H1 (cell line): ENCODE measurements at regions of chr6 and their contacts with region 1.

Region 1: DNA sequence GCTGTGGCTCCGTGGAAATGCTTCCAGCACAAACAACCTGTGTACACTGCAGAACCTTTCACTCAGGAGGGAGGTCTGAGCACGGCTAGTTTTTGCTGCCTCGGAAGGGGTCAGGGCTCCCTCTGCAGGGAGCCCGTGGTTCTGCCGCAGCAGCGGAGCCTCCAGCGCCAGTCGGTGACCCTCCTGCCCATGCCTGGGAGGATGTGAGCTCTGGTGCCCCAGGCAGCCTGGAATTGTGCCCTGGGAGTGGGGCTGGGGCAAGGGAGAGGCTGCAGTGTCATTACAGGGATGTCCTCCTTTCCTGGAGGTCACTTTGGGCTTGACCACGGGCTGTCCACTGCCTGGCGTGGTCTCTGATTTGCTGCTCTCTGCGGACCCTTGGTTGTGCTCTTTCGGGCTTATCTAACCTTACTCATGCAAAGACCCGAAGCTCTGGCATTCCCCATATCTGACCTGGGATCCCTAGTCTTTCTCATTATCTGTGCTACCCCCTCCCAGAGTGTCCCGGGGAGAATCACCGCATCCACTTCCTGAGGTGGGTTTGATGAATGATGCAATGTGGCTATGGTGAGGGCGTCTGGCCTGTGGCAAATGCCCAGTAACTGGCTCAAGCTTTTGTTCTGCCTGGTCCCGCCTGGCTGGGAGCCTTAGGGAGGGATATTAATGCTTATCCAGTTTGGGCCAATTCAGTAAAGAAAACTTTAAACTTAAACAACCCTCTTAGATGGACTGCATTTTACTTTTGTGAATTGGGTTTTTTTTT is 59.6 kb upstream of the TAGAP start:
- DNase-seq: peak; percentile 46 to 85
- H3K4me3 ChIP-seq: no peak overlapping the region
- H3K27ac ChIP-seq: no peak overlapping the region
- H3K4me1 ChIP-seq: peaks cover 1 to 4% (median 2%) of the 10 kb centered on the region in 4 experiments; a peak in 6 of 7 replicates
- H3K27me3 ChIP-seq: no peaks in the 10 kb centered on the region; a peak in 1 of 7 replicates
- CTCF ChIP-seq: peak; percentile 94 to 96 (median 95)
- EP300 ChIP-seq: no peak
- POLR2A ChIP-seq: peak in 1 of 2 experiments; percentile 34; a peak in 1 of 3 replicates
- RAD21 ChIP-seq: peak; percentile 91 to 96

Region 2: DNA sequence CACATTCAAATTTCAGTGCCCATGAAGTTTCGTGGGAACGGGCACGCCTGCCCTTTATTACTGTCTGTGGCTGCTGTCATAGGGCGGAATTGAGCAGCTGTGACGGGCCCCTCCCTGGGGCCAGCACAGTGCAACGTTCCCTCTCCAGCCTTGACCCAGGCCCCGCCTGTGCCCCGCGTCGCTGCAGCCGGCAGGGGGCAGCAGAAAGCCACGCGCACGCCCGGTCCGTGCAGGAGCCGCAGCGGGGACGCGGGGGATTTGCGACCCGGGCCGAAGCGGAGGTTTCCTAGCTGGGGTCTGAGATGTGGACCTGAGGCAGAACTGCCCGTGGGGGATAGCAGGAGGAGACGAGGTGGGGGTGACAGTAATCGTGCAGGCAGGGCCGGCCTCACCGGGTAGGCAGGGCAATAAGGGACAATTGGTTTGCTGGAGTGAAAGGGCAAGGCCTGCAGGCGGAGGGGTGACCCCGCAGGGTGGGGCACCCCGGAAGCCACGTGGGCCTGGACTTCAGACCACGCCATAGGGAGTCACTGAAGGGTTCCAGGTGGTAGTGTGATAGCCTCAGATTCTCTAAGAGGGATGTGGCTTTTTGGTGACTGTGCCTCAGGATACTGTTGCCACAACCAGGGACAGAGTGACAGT is 400.0 kb before region 1 on chr6:
- CTCF ChIA-PET with region 1: interaction called, 13 read pairs
- POLR2A ChIA-PET with region 1: no interaction called
- DNase-seq: peak; percentile 41 to 97
- H3K4me3 ChIP-seq: peak overlapping the region in 3 of 4 experiments; percentile 4 to 46 (median 19); a peak in 3 of 8 replicates
- H3K27ac ChIP-seq: no peak overlapping the region
- H3K4me1 ChIP-seq: peaks cover 0 to 4% (median 1%) of the 10 kb centered on the region in 4 experiments; a peak in 1 of 7 replicates
- H3K27me3 ChIP-seq: no peaks in the 10 kb centered on the region
- CTCF ChIP-seq: peak; percentile 93 to 94 (median 94)
- EP300 ChIP-seq: no peak
- POLR2A ChIP-seq: no peak
- RAD21 ChIP-seq: peak; percentile 95

Region 3: GRCh38 chr6:159042003-159042825 is 62.1 kb before region 1 on chr6:
- CTCF ChIA-PET with region 1: interaction called, 144 read pairs
- POLR2A ChIA-PET with region 1: interaction called, 4 read pairs
- DNase-seq: peak; percentile 59 to 73
- H3K4me3 ChIP-seq: peak overlapping the region in 1 of 4 experiments; percentile 24; a peak in 1 of 8 replicates
- H3K27ac ChIP-seq: peak overlapping the region; percentile 69
- H3K4me1 ChIP-seq: no peaks in the 10 kb centered on the region; a peak in 1 of 7 replicates
- H3K27me3 ChIP-seq: no peaks in the 10 kb centered on the region
- CTCF ChIP-seq: peak; percentile 88 to 97 (median 92)
- EP300 ChIP-seq: no peak
- POLR2A ChIP-seq: no peak
- RAD21 ChIP-seq: peak; percentile 83 to 87

Region 4: GRCh38 chr6:159080217-159080976 is 23.9 kb before region 1 on chr6:
- CTCF ChIA-PET with region 1: interaction called, 20 read pairs
- POLR2A ChIA-PET with region 1: interaction called, 4 read pairs
- DNase-seq: no peak
- H3K4me3 ChIP-seq: no peak overlapping the region
- H3K27ac ChIP-seq: no peak overlapping the region
- H3K4me1 ChIP-seq: no peaks in the 10 kb centered on the region
- H3K27me3 ChIP-seq: peaks cover 0 to 3% (median 0%) of the 10 kb centered on the region in 4 experiments; a peak in 1 of 7 replicates
- CTCF ChIP-seq: no peak
- EP300 ChIP-seq: no peak
- POLR2A ChIP-seq: no peak
- RAD21 ChIP-seq: no peak

Region 5: DNA sequence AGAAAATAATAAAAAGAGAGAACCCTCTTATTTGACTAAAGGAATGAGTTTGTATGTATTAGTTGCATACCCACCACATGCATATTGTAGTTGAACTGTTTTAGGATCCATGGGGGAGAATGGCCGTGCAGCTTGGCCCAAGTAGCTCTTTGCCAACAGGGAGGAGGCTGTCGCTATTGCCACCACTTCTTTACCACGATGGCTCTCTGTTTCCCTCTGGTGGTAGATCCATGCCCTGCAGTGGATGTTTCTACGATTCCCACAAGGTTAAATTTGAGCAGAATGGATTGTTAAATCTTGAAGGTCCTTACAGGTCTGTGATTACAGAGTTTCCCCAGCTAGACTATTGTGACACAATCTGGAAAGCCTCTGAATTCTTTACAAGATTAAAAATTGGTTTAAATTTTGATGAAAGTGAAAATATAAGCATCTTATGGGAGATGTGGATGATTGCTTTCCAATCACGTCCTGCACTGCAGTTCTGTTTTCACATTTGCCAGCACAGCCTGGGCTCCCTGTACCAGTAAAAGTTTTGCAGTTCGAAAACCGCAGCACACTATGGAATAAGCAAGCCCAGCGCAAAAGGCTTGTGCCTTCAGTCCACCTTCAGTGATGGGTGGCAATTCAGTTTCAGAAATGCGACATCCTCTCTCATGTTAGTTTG is 30.5 kb after region 1 on chr6:
- CTCF ChIA-PET with region 1: interaction called, 27 read pairs
- POLR2A ChIA-PET with region 1: no interaction called
- DNase-seq: peak; percentile 64 to 96
- H3K4me3 ChIP-seq: no peak overlapping the region
- H3K27ac ChIP-seq: no peak overlapping the region
- H3K4me1 ChIP-seq: no peaks in the 10 kb centered on the region
- H3K27me3 ChIP-seq: no peaks in the 10 kb centered on the region
- CTCF ChIP-seq: peak; percentile 73 to 96 (median 94)
- EP300 ChIP-seq: no peak
- POLR2A ChIP-seq: no peak
- RAD21 ChIP-seq: peak; percentile 92 to 93

Region 6: GRCh38 chr6:159161839-159162238 is 57.5 kb after region 1 on chr6:
- CTCF ChIA-PET with region 1: no interaction called
- POLR2A ChIA-PET with region 1: no interaction called
- DNase-seq: no peak
- H3K4me3 ChIP-seq: no peak overlapping the region
- H3K27ac ChIP-seq: no peak overlapping the region
- H3K4me1 ChIP-seq: no peaks in the 10 kb centered on the region
- H3K27me3 ChIP-seq: peaks cover 0 to 11% (median 5%) of the 10 kb centered on the region in 4 experiments; a peak in 5 of 7 replicates
- CTCF ChIP-seq: no peak
- EP300 ChIP-seq: no peak
- POLR2A ChIP-seq: no peak
- RAD21 ChIP-seq: no peak